ENCODE measurements at regions of chr11 and their contacts with region 1.

Region 1: DNA sequence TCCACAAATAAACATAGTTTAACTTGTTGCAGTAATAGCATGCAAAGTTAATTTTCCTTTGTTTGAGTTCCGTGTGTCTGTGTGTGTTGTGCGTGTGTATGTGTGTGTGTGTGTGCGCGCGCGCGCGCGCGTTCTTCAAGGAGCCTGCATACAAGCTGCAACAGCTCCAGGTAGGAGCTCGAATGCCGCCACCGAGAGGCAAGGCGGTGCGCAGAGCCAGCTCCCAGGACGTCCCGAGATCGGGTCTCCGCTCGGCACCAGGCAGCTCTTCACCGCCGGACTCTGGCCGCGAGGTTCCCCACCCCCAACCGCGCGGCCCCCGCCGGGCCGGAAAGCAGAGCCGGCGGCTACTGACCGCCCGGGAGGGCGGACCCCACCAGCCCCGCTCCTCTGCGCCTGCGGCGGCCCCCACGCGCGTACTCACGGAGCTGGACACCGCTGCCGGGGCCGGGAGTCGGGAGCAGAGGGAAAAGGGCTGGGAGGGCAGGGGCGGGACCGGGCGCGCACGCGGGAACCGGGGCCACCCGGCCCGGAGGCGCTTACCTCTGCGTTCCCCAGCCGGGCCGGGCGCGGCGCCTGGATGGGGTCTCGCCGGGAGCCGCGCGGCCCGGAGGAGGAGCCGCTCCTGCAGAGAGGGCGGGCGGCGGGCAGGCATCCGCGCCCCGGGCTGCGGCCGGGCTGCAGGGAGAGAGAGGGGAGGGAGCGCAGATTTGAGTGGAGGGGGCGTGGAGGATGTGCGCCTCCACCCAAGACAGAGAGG is 40.4 kb upstream of the AKIP1 start:
- DNase-seq: no peak
- H3K4me3 ChIP-seq: peak overlapping the region; percentile 84 to 98 (median 92)
- H3K27ac ChIP-seq: peak overlapping the region; percentile 89 to 96 (median 92)
- H3K4me1 ChIP-seq: peaks cover 13 to 80% (median 64%) of the 10 kb centered on the region in 4 donors
- H3K27me3 ChIP-seq: no peaks in the 10 kb centered on the region
- CTCF ChIP-seq: no peak
- EP300 ChIP-seq: no peak
- POLR2A ChIP-seq: no peak

Region 2: DNA sequence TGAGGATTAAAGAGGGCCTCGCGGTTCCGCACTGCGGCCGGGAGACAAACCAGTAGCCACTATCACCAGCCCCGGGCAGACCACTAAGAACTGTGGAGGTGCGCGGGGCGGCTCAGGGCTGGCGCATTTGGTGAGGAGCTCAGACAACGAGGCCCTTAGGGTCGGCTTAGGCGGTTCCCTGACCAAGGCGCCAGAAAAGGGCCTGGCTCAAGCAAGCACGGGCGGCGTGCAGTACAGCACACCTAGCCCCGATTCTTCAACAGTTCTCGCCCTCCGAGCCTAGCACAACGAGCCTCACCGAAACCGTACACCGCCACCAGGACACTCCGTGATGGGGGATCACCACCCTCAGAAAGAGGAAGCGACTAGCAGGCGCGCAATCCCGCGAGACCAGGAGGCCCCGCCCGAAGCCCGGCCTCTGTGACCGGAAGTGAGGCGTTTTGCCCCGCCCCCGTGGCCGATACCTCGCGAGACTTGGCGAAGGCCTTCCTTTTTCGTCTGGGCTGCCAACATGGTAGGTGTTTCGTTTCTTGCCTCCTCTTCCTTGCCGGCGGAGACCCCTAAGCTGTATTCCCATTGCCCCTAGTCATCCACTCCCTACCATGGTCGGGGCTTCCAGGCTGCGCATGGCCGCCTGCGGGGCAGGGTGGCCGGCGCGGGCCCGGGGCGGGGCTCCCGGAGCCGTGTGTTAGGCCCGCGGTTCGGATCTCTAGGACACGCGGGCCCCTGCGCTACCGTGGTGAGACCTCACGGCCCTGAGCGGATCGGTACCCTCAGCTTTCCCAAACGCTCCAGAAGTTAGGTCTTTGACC is 188.1 kb before region 1 on chr11 and contains the starts of genes RPL27A and TRIM66:
- intact Hi-C with region 1: loop called (anchors 5 kb)
- DNase-seq: peak; percentile 100
- H3K4me3 ChIP-seq: peak within 1 kb of the TSS; percentile 79 to 92 (median 82)
- H3K27ac ChIP-seq: peak within 1 kb of the TSS; percentile 93 to 98 (median 95)
- H3K4me1 ChIP-seq: peaks cover 23 to 33% (median 32%) of the 10 kb centered on the region in 4 donors
- H3K27me3 ChIP-seq: no peaks in the 10 kb centered on the region
- CTCF ChIP-seq: peak in 1 of 3 experiments; percentile 37
- EP300 ChIP-seq: no peak
- POLR2A ChIP-seq: peak; percentile 99
- total RNA-seq, gene RPL27A: 665 to 1,629 (median 791) TPM
- total RNA-seq, gene TRIM66: 2.2 to 5.4 (median 3.1) TPM

Region 3: GRCh38 chr11:8823174-8823742 is 47.3 kb before region 1 on chr11:
- intact Hi-C with region 1: no loop called
- DNase-seq: no peak
- H3K4me3 ChIP-seq: no peak overlapping the region
- H3K27ac ChIP-seq: no peak overlapping the region
- H3K4me1 ChIP-seq: peaks cover 0 to 15% (median 6%) of the 10 kb centered on the region in 4 donors
- H3K27me3 ChIP-seq: no peaks in the 10 kb centered on the region
- CTCF ChIP-seq: no peak
- EP300 ChIP-seq: no peak
- POLR2A ChIP-seq: no peak

Region 4: DNA sequence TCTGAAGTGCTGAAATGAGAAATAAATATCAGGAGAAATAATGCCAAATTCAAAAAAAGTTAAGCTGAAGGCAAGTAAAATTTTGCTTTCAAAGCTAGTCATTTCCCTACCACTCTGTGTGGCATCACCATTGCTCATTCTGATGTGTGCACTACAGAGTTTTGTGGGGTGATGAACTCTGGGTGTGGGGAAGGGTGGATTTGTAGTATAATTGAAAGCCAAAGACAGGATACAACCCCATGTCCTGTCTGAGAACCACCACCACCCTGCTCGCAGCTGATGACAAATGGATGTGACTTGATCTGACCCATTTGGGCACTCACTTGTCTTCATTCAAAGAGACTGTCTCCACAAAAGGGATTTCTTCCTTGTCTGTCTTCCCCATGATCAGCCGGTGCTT is 113.0 kb after region 1 on chr11:
- intact Hi-C with region 1: no loop called
- DNase-seq: no peak
- H3K4me3 ChIP-seq: no peak overlapping the region
- H3K27ac ChIP-seq: no peak overlapping the region
- H3K4me1 ChIP-seq: no peaks in the 10 kb centered on the region
- H3K27me3 ChIP-seq: no peaks in the 10 kb centered on the region
- CTCF ChIP-seq: no peak
- EP300 ChIP-seq: no peak
- POLR2A ChIP-seq: no peak

Region 5: DNA sequence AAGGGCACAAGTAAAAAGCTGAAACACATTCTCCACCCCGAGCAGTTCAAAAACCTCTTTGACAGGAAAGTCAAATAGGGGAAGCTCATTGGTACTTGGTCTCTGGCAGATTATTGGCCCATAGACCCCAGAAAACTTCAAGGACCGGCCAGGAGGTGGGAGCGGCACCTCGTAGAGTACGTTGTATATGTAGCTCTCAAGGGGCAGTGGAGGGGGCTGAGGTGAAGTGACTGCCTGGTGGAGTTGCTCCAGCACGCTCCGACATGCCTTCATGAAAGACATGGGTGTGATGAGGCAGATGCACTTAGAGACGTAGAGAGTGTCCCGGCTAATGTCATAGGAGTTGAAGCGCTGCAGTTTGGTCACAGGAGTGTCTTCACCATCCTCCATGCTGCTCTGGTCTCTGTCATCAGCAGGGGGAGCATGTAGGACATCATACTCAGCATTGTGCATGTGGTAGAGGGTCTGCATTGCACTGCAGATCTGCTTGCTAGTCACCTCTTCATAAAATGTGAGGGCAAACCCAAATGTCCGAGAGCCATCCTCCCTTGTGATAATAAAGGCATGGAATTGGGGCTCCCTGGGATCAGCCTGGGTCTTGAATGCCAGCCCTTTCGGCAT is 333.2 kb after region 1 on chr11:
- intact Hi-C with region 1: no loop called
- DNase-seq: no peak
- H3K4me3 ChIP-seq: no peak overlapping the region
- H3K27ac ChIP-seq: no peak overlapping the region
- H3K4me1 ChIP-seq: peaks cover 15 to 27% (median 20%) of the 10 kb centered on the region in 4 donors
- H3K27me3 ChIP-seq: no peaks in the 10 kb centered on the region
- CTCF ChIP-seq: no peak
- EP300 ChIP-seq: no peak
- POLR2A ChIP-seq: no peak

Region 6: DNA sequence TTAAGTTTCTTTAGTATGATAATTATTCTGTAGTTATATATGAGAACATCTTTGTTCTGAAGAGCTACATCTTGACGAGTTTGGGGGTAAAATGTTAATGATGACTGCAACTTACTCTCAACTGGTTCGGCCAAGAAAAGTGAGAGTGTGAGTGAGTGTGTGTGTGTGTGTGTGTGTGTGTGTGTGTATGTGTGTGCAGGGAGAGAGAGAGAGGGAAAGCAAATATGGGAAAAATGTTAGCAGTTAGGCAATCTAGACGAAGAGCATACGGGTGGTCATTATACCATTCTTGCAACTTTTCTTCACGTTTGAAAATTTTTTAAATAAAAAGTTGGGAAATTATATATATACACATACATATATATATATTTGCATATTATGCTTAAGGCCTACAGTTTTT is 462.1 kb after region 1 on chr11:
- intact Hi-C with region 1: no loop called
- DNase-seq: no peak
- H3K4me3 ChIP-seq: no peak overlapping the region
- H3K27ac ChIP-seq: no peak overlapping the region
- H3K4me1 ChIP-seq: peaks cover 0 to 4% (median 0%) of the 10 kb centered on the region in 4 donors
- H3K27me3 ChIP-seq: no peaks in the 10 kb centered on the region
- CTCF ChIP-seq: no peak
- EP300 ChIP-seq: no peak
- POLR2A ChIP-seq: no peak